ENCODE measurements at regions of chr5 and their contacts with region 1.

Region 1: DNA sequence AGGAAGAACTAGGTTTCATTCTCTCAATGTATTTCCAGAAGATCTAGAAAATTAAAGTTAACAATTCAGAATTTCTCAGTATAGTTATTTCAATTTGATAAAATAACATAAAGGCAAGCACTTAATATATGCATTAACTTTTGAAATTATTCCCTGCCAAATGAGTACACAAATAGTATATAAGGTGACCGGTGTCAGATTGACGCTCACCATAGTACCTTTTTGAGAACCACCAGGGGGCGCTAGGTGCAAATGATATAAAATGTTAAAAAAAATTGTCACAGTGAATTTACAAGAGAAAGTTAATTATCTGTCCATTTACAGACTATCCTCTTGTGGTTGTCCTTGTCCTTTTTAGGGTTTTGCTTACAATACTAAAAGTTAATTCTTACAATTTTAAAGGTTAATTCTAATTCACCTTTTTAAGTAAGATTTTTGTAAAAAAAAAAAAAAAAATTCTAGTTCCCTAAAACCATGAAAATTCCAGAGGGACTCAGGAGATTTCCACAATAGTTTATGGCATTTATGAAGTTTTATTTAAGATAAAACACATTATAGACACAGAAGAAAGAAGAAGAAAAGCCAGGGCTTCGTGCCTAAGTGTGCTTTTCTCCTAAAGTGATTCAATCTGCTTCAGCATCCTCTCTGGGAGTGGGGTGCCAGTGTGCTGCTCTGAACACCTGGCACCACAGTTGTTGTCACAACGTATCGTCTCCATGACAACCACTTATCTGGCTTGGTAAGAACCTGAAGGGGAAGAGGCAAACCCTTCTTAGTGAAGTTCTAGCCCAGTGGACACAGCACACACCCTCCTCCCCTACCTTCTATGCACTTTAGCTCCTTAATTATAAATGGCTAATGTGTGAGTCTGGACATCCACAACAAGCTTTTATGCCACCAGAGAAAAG is 1.7 kb downstream of the ADAMTS16 start:
- DNase-seq: peak in 2 of 4 donors; percentile 54 to 74
- ATAC-seq: peak; percentile 75
- H3K4me3 ChIP-seq: no peak overlapping the region
- H3K27ac ChIP-seq: no peak overlapping the region
- H3K4me1 ChIP-seq: peaks cover 0 to 19% of the 10 kb centered on the region in 2 donors
- H3K27me3 ChIP-seq: peaks cover 24 to 47% of the 10 kb centered on the region in 2 donors
- CTCF ChIP-seq: peak; percentile 66 to 67

Region 2: GRCh38 chr5:4862500-4862899 is 279.4 kb before region 1 on chr5:
- intact Hi-C with region 1: no loop called
- DNase-seq: peak in 1 of 4 donors; percentile 36
- ATAC-seq: peak; percentile 51
- H3K4me3 ChIP-seq: no peak overlapping the region
- H3K27ac ChIP-seq: no peak overlapping the region
- H3K4me1 ChIP-seq: no peaks in the 10 kb centered on the region
- H3K27me3 ChIP-seq: no peaks in the 10 kb centered on the region
- CTCF ChIP-seq: peak in 1 of 2 donors; percentile 24

Region 3: GRCh38 chr5:4879693-4880303 is 262.1 kb before region 1 on chr5:
- intact Hi-C with region 1: loop called in 1 of 2 experiments (anchors 10 kb)
- DNase-seq: peak in 3 of 4 donors; percentile 66 to 83 (median 66)
- ATAC-seq: peak; percentile 97
- H3K4me3 ChIP-seq: no peak overlapping the region
- H3K27ac ChIP-seq: no peak overlapping the region
- H3K4me1 ChIP-seq: no peaks in the 10 kb centered on the region
- H3K27me3 ChIP-seq: no peaks in the 10 kb centered on the region
- CTCF ChIP-seq: peak; percentile 74 to 93

Region 4: GRCh38 chr5:5270958-5271605 is 129.2 kb after region 1 on chr5:
- intact Hi-C with region 1: no loop called
- DNase-seq: peak; percentile 19 to 92 (median 67)
- ATAC-seq: peak; percentile 99
- H3K4me3 ChIP-seq: no peak overlapping the region
- H3K27ac ChIP-seq: no peak overlapping the region
- H3K4me1 ChIP-seq: no peaks in the 10 kb centered on the region
- H3K27me3 ChIP-seq: no peaks in the 10 kb centered on the region
- CTCF ChIP-seq: no peak

Region 5: DNA sequence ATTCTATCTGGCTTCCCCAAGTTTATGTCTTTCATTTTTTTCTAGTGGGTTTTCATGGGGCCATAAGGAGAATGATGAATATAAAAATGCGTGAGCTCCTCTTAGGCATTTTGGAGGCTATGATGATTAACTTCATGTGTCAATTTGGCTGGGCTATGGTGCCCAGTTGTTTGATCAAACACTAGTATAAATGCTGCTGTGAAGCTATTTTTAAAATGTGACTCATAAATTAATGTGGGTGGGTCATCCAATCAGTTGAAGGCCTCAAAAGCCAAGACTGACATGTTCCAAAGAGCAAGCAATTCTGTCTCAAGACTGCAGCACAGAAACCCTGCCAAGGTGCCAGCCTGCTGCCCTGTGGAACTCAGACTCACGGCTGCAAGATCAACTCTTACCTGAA is 256.2 kb after region 1 on chr5:
- intact Hi-C with region 1: loop called in 1 of 2 experiments (anchors 10 kb)
- DNase-seq: no peak
- ATAC-seq: no peak
- H3K4me3 ChIP-seq: no peak overlapping the region
- H3K27ac ChIP-seq: no peak overlapping the region
- H3K4me1 ChIP-seq: no peaks in the 10 kb centered on the region
- H3K27me3 ChIP-seq: no peaks in the 10 kb centered on the region
- CTCF ChIP-seq: no peak

Measured in left lung (tissue), 14 donors.